ENCODE measurements at regions of chr16 and their contacts with region 1.

Region 1: GRCh38 chr16:84754353-84754856 is 54.6 kb downstream of the USP10 start:
- DNase-seq: peak; percentile 78
- ATAC-seq: peak; percentile 82
- H3K4me3 ChIP-seq: no peak overlapping the region; the same call in 1 of the 2 replicates
- H3K27ac ChIP-seq: peak overlapping the region; percentile 56
- H3K4me1 ChIP-seq: peaks cover 54% of the 10 kb centered on the region
- H3K27me3 ChIP-seq: no peaks in the 10 kb centered on the region
- CTCF ChIP-seq: peak; percentile 70 to 85 (median 80)
- EP300 ChIP-seq: no peak
- POLR2A ChIP-seq: no peak
- RAD21 ChIP-seq: peak; percentile 81

Region 2: GRCh38 chr16:84462261-84463210 is 291.9 kb before region 1 on chr16:
- CTCF ChIA-PET with region 1: no interaction called
- POLR2A ChIA-PET with region 1: no interaction called
- RAD21 ChIA-PET with region 1: no interaction called
- SMC1A ChIA-PET with region 1: no interaction called
- in situ Hi-C with region 1: no loop called
- intact Hi-C with region 1: no loop called
- DNase-seq: no peak
- ATAC-seq: no peak
- H3K4me3 ChIP-seq: no peak overlapping the region
- H3K27ac ChIP-seq: no peak overlapping the region
- H3K4me1 ChIP-seq: no peaks in the 10 kb centered on the region
- H3K27me3 ChIP-seq: no peaks in the 10 kb centered on the region
- CTCF ChIP-seq: no peak
- EP300 ChIP-seq: no peak
- POLR2A ChIP-seq: no peak
- RAD21 ChIP-seq: no peak

Region 3: GRCh38 chr16:84511180-84511824 is 243.1 kb before region 1 on chr16:
- CTCF ChIA-PET with region 1: interaction called, 7 read pairs
- POLR2A ChIA-PET with region 1: no interaction called
- RAD21 ChIA-PET with region 1: interaction called, 3 read pairs
- SMC1A ChIA-PET with region 1: interaction called, 18 read pairs
- in situ Hi-C with region 1: no loop called
- intact Hi-C with region 1: no loop called
- DNase-seq: peak; percentile 62
- ATAC-seq: peak; percentile 37
- H3K4me3 ChIP-seq: no peak overlapping the region
- H3K27ac ChIP-seq: peak overlapping the region; percentile 63
- H3K4me1 ChIP-seq: peaks cover 64% of the 10 kb centered on the region
- H3K27me3 ChIP-seq: no peaks in the 10 kb centered on the region
- CTCF ChIP-seq: peak; percentile 93 to 96 (median 94)
- EP300 ChIP-seq: no peak
- POLR2A ChIP-seq: no peak
- RAD21 ChIP-seq: peak; percentile 96

Region 4: DNA sequence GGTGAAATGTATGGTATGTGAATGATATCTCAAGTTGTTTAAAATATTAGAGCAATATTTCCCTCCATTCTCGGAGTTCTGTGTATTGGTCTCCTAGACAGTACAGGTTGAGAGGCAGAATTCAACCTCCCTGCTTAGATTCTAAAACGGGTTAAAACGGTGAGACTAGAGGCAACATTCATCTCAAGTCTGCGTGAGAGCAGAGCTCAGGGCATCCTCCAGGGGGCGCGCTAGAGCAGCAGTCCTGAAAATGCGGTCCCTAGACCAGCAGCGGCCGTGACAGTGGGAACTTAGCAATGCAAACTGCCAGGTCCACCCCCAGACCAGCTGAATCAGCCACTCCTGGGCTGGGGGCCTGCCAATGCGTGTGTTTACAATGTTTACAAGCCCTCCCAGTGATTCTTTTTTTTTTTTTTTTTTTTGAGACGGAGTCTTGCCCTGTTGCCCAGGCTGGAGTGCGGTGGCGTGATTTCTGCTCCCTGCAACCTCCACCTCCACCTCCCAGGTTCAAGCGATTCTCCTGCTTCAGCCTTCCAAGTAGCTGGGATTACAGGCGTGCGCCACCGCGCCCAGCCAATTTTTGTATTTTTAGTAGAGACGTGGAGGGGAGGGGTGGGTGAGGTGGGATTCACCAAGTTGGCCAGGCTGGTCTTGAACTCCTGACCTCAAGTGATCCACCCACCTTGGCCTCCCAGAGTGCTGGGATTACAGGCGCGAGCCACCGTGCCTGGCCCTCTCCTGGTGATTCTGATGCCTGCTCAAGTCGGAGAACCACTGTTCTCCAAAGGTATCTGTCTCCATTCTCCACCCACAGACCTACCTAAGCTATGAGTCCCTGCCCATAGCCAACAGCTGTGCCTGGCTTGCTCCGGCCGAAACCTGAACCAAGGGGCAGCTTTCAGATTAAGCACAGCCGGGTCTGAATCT is 81.9 kb before region 1 on chr16:
- CTCF ChIA-PET with region 1: interaction called, 15 read pairs
- POLR2A ChIA-PET with region 1: no interaction called
- RAD21 ChIA-PET with region 1: no interaction called
- SMC1A ChIA-PET with region 1: interaction called, 7 read pairs
- in situ Hi-C with region 1: no loop called
- intact Hi-C with region 1: no loop called
- DNase-seq: no peak
- ATAC-seq: peak; percentile 98
- H3K4me3 ChIP-seq: no peak overlapping the region
- H3K27ac ChIP-seq: no peak overlapping the region
- H3K4me1 ChIP-seq: no peaks in the 10 kb centered on the region
- H3K27me3 ChIP-seq: no peaks in the 10 kb centered on the region
- CTCF ChIP-seq: peak; percentile 86 to 95 (median 93)
- EP300 ChIP-seq: no peak
- POLR2A ChIP-seq: no peak
- RAD21 ChIP-seq: peak; percentile 74

Region 5: GRCh38 chr16:84774810-84775209 is 20.4 kb after region 1 on chr16:
- CTCF ChIA-PET with region 1: interaction called, 12 read pairs
- POLR2A ChIA-PET with region 1: no interaction called
- RAD21 ChIA-PET with region 1: no interaction called
- SMC1A ChIA-PET with region 1: interaction called, 8 read pairs
- in situ Hi-C with region 1: no loop called
- intact Hi-C with region 1: no loop called
- DNase-seq: no peak
- ATAC-seq: no peak
- H3K4me3 ChIP-seq: no peak overlapping the region
- H3K27ac ChIP-seq: no peak overlapping the region
- H3K4me1 ChIP-seq: no peaks in the 10 kb centered on the region
- H3K27me3 ChIP-seq: no peaks in the 10 kb centered on the region
- CTCF ChIP-seq: no peak
- EP300 ChIP-seq: no peak
- POLR2A ChIP-seq: no peak
- RAD21 ChIP-seq: no peak

Region 6: GRCh38 chr16:84839054-84839453 is 84.6 kb after region 1 on chr16:
- CTCF ChIA-PET with region 1: no interaction called
- POLR2A ChIA-PET with region 1: no interaction called
- RAD21 ChIA-PET with region 1: no interaction called
- SMC1A ChIA-PET with region 1: no interaction called
- in situ Hi-C with region 1: no loop called
- intact Hi-C with region 1: no loop called
- DNase-seq: no peak
- ATAC-seq: no peak
- H3K4me3 ChIP-seq: no peak overlapping the region
- H3K27ac ChIP-seq: no peak overlapping the region
- H3K4me1 ChIP-seq: no peaks in the 10 kb centered on the region
- H3K27me3 ChIP-seq: peaks cover 4 to 6% of the 10 kb centered on the region in 2 experiments; a peak in 3 of 4 replicates
- CTCF ChIP-seq: no peak
- EP300 ChIP-seq: no peak
- POLR2A ChIP-seq: no peak
- RAD21 ChIP-seq: no peak

Region 7: DNA sequence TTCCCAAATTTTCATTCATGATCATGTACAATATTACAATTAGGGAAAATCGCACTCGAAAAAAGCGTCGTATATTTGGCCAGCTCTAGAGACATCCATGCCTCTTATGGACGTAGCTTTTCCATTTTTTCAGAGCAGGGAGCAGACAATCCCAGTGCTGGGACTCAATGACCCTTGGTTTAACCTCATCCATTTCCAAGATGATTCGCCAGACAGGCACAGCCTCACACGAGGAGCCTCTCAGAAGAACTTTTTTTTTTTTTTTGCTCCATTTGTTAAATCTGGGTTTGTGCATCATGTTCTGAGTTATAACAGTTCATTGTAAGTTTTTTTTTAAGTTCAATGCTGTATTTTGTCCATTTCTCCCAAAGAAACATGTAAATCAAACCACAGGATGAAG is 164.9 kb after region 1 on chr16:
- CTCF ChIA-PET with region 1: interaction called, 24 read pairs
- POLR2A ChIA-PET with region 1: no interaction called
- RAD21 ChIA-PET with region 1: interaction called, 4 read pairs
- SMC1A ChIA-PET with region 1: interaction called, 10 read pairs
- in situ Hi-C with region 1: no loop called
- intact Hi-C with region 1: no loop called
- DNase-seq: no peak
- ATAC-seq: no peak
- H3K4me3 ChIP-seq: no peak overlapping the region
- H3K27ac ChIP-seq: no peak overlapping the region
- H3K4me1 ChIP-seq: no peaks in the 10 kb centered on the region
- H3K27me3 ChIP-seq: peaks cover 3 to 5% of the 10 kb centered on the region in 2 experiments; a peak in 3 of 4 replicates
- CTCF ChIP-seq: no peak
- EP300 ChIP-seq: no peak
- POLR2A ChIP-seq: no peak
- RAD21 ChIP-seq: no peak

Region 8: GRCh38 chr16:84952335-84953189 is 198.2 kb after region 1 on chr16:
- CTCF ChIA-PET with region 1: interaction called, 170 read pairs
- POLR2A ChIA-PET with region 1: interaction called, 5 read pairs
- RAD21 ChIA-PET with region 1: interaction called, 72 read pairs
- SMC1A ChIA-PET with region 1: interaction called, 91 read pairs
- in situ Hi-C with region 1: no loop called
- intact Hi-C with region 1: loop called (anchors 1 kb)
- DNase-seq: peak; percentile 40
- ATAC-seq: peak; percentile 94
- H3K4me3 ChIP-seq: no peak overlapping the region
- H3K27ac ChIP-seq: no peak overlapping the region
- H3K4me1 ChIP-seq: peaks cover 4% of the 10 kb centered on the region; the same call in 1 of the 2 replicates
- H3K27me3 ChIP-seq: no peaks in the 10 kb centered on the region; a peak in 1 of 4 replicates
- CTCF ChIP-seq: peak; percentile 85
- EP300 ChIP-seq: no peak
- POLR2A ChIP-seq: no peak
- RAD21 ChIP-seq: peak; percentile 58